ENCODE measurements at regions of chr5 and their contacts with region 1.

Region 1: DNA sequence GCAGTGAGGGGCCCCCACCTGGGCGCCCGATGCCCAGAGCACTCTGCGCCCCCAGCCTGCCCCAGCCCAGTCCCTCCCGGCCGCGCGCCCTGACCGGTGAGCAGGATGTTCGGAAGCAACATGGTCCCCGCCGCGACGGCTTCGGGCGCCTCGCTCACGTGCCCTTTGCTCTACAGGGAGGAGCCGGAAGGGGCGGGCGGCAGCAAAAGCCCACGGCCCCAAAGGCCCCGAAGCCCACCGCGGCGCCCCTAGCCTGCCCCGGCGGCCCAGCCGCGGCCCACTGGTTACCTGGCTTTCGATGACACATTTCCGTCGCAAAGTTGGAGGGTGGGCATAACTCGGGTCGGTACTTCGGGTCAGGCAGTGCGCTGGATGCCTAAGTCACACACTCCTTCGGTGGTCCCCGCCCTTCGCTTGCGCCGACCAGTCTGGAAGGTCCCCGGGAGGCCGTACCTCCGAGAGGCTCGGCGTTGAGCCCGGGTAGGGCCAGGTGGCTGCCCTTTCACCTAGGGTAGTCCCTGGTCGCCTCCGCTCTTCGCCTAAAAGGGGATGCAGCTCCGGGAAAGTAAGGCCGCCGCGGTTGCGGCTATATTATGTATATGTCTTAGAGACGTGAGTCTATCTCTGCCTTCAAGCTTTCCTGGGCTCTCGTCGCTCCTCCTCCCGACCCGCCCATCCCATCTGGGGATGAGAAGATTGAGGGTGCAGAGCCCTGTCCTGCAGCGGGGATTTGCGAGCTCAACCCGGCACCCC is at the starts of genes AK6, RAD17 and TAF9:
- DNase-seq: peak; percentile 98
- total RNA-seq, gene AK6: 31.9 to 36.1 TPM
- total RNA-seq, gene RAD17: 17.8 to 18.2 TPM
- total RNA-seq, gene TAF9: 30.9 to 35.6 TPM

Region 2: DNA sequence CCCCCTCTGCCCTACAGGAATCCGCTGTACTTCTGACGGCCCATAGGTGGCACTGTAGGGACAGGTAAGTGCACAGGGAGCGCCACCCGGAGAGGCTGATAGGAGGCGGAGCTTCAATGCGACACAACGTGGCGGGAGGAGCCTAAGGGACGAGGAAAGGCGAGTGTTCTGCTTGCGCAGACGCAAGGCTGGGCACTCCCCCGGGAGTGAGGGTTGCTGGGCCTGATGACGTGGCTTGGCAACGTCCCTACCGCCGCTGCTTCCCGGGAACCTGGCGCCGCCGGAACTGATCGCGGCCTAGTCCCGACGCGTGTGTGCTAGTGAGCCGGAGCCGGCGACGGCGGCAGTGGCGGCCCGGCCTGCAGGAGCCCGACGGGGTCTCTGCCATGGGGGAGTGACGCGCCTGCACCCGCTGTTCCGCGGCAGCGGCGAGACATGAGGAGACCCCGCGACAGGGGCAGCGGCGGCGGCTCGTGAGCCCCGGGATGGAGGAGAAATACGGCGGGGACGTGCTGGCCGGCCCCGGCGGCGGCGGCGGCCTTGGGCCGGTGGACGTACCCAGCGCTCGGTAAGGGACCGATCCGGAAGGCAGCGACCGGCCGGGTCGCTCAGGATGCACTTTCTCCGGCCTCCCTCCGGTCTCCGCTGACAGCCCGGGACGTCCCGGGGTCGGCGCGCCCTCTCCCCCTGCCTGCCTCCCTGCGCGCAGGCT is 275.6 kb before region 1 on chr5 and contains the start of gene SLC30A5:
- intact Hi-C with region 1: loop called in 1 of 2 experiments (anchors 10 kb)
- DNase-seq: peak; percentile 99
- total RNA-seq, gene SLC30A5: 43.7 to 47.3 TPM